ENCODE measurements at regions of chr17 and their contacts with region 1.

Region 1: DNA sequence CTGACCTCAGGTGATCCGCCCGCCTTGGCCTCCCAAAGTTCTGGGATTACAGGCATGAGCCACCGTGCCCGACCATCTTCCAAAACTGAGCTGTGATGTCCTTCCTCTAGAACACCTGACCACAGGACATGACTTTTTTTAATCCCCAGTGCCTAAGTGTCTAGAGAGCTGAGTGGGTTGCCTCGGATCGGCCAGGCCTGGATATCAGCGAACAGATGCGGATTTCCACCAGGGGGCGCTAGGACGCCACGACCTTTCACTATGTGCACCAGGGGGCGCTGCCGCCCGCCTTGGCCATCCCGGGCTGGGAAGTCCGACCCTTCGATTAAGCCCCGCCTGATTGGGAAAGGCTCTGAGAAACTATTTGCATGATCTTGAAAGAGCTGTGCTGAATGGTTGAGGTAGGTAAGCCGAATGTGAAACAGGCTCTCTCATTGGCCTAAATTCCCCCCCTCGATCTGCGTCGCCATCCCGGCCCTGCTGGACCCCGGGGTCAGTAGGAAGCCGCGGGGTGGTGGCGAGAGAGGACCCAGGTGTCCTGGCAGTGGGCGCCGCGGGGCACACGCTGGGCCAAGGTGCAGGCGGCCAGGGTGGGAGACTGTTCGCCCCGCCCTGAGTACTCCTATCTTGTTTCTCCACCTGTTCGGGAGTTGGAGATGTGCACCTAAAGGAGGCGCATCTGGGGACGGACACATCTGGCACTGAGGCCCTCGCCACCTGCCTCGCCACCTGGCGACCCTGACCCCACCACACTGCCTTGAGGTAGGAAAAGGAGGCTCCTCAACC is at the start of gene ACBD4:
- DNase-seq: peak; percentile 97
- ATAC-seq: peak; percentile 71
- H3K4me3 ChIP-seq: peak within 1 kb of the TSS; percentile 47
- H3K27ac ChIP-seq: peak within 1 kb of the TSS; percentile 4
- H3K4me1 ChIP-seq: peaks cover 15% of the 10 kb centered on the region
- H3K27me3 ChIP-seq: no peaks in the 10 kb centered on the region
- CTCF ChIP-seq: peak; percentile 100; the same call in 1 of the 2 replicates
- POLR2A ChIP-seq: 0 out of 2 replicates have a peak, but pooled peaks have one; percentile 47
- RAD21 ChIP-seq: peak; percentile 99
- total RNA-seq, gene ACBD4: 1.7 and 2.3 TPM in 2 replicates

Region 2: GRCh38 chr17:44775136-44775837 is 360.1 kb before region 1 on chr17:
- CTCF ChIA-PET with region 1: no interaction called
- POLR2A ChIA-PET with region 1: no interaction called
- dilution Hi-C with region 1: no loop called
- in situ Hi-C with region 1: no loop called
- intact Hi-C with region 1: loop called (anchors 2 kb)
- DNase-seq: peak; percentile 95
- ATAC-seq: peak; percentile 95
- H3K4me3 ChIP-seq: peak overlapping the region; percentile 53
- H3K27ac ChIP-seq: no peak overlapping the region
- H3K4me1 ChIP-seq: peaks cover 3% of the 10 kb centered on the region; the same call in 1 of the 2 replicates
- H3K27me3 ChIP-seq: peaks cover 9% of the 10 kb centered on the region
- CTCF ChIP-seq: no peak
- POLR2A ChIP-seq: no peak
- RAD21 ChIP-seq: no peak

Region 3: GRCh38 chr17:44887016-44887415 is 248.4 kb before region 1 on chr17:
- CTCF ChIA-PET with region 1: no interaction called
- POLR2A ChIA-PET with region 1: no interaction called
- dilution Hi-C with region 1: no loop called
- in situ Hi-C with region 1: no loop called
- intact Hi-C with region 1: no loop called
- DNase-seq: no peak
- ATAC-seq: no peak
- H3K4me3 ChIP-seq: no peak overlapping the region
- H3K27ac ChIP-seq: no peak overlapping the region
- H3K4me1 ChIP-seq: no peaks in the 10 kb centered on the region
- H3K27me3 ChIP-seq: no peaks in the 10 kb centered on the region
- CTCF ChIP-seq: no peak
- POLR2A ChIP-seq: no peak
- RAD21 ChIP-seq: no peak

Region 4: GRCh38 chr17:44911133-44912001 is 224.0 kb before region 1 on chr17:
- CTCF ChIA-PET with region 1: no interaction called
- POLR2A ChIA-PET with region 1: no interaction called
- dilution Hi-C with region 1: no loop called
- in situ Hi-C with region 1: no loop called
- intact Hi-C with region 1: no loop called
- DNase-seq: peak; percentile 24
- ATAC-seq: peak; percentile 42
- H3K4me3 ChIP-seq: no peak overlapping the region
- H3K27ac ChIP-seq: no peak overlapping the region
- H3K4me1 ChIP-seq: peaks cover 11% of the 10 kb centered on the region
- H3K27me3 ChIP-seq: peaks cover 9% of the 10 kb centered on the region; the same call in 1 of the 2 replicates
- CTCF ChIP-seq: peak; percentile 47
- POLR2A ChIP-seq: no peak
- RAD21 ChIP-seq: 0 out of 2 replicates have a peak, but pooled peaks have one; percentile 14

Region 5: DNA sequence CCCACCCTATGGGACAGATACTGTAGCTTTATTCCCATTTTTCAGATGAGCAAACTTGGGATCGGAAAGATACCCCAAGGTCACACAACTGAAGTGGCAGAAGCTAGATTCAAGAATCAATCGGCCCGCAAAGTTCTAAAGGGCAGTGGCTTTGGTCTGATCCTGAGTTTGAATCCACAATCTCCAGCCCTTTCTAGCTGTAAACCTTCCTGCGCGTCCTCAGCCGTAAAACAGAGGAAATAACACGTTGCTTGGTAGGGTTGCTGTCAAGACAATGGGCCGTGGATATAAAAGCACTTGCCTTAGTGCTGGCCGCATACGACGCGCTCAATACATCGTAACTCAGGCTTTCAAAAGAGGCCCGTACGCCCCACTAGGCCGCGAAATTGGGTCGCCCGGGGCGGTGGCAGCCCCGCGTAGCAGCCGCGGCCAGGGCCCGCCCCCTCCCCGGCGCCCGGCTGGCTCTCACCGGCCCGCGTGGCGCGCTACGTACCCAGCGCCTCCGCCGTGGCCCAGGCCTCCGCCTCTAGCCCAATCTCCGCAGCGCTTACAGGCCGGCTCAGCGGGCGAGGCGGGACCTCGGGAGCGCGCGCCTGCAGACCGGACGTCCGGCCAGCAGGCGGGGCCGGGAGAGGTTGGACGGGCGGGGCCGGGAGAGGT is 84.2 kb before region 1 on chr17 and contains the start of gene DCAKD:
- CTCF ChIA-PET with region 1: interaction called, 4 read pairs
- POLR2A ChIA-PET with region 1: interaction called, 3 read pairs
- dilution Hi-C with region 1: no loop called
- in situ Hi-C with region 1: no loop called
- intact Hi-C with region 1: loop called (anchors 5 kb)
- DNase-seq: peak; percentile 95
- ATAC-seq: peak; percentile 99
- H3K4me3 ChIP-seq: peak within 1 kb of the TSS; percentile 75
- H3K27ac ChIP-seq: peak within 1 kb of the TSS; percentile 99
- H3K4me1 ChIP-seq: peaks cover 6% of the 10 kb centered on the region; the same call in 1 of the 2 replicates
- H3K27me3 ChIP-seq: no peaks in the 10 kb centered on the region
- CTCF ChIP-seq: no peak
- POLR2A ChIP-seq: peak; percentile 89
- RAD21 ChIP-seq: no peak
- total RNA-seq, gene DCAKD: 42.5 and 47.9 TPM in 2 replicates

Region 6: DNA sequence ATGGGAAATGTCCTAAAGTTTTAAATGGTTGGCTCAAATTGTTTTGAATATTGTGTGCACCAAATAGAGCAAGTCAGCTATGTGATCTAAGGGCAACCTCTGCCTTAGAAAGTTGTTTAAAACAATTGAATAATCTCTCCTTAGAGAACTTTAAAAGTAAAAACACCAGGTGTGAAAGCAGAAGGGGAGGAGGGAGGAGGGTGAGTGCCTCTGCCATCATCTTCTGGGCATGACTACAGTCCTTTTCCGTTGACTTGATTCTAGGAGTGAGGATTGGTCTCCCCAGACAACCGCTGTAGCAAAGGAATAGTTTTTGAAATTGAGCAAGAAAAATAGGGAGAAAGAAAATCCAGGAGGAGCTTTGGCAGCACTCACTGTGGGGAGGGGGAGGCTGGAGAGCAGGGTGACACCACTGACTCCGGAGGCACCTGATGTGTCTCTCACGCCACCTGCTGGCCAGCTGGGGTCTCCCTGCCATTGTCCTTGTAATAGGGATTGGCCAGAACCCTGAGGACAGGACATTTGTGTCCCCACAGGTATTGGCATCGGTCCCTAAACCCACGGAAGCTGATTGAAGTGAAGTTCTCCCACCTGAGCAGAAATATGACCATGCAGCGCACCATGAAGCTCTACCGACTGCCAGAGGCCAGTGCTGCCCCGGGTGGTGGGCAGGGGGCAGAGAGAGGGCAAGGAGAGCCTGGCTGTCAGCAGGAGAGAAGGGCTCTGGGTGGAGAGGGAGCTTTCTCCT is 36.3 kb before region 1 on chr17:
- CTCF ChIA-PET with region 1: interaction called, 7 read pairs
- POLR2A ChIA-PET with region 1: no interaction called
- dilution Hi-C with region 1: no loop called
- in situ Hi-C with region 1: no loop called
- intact Hi-C with region 1: loop called (anchors 1 kb)
- DNase-seq: peak; percentile 66
- ATAC-seq: peak; percentile 85
- H3K4me3 ChIP-seq: no peak overlapping the region
- H3K27ac ChIP-seq: peak overlapping the region; percentile 66; the same call in 1 of the 2 replicates
- H3K4me1 ChIP-seq: peaks cover 7% of the 10 kb centered on the region; the same call in 1 of the 2 replicates
- H3K27me3 ChIP-seq: no peaks in the 10 kb centered on the region
- CTCF ChIP-seq: peak; percentile 78
- POLR2A ChIP-seq: no peak
- RAD21 ChIP-seq: peak; percentile 77

Region 7: GRCh38 chr17:45161019-45161825 is 25.8 kb after region 1 on chr17:
- CTCF ChIA-PET with region 1: interaction called, 12 read pairs
- POLR2A ChIA-PET with region 1: interaction called, 3 read pairs
- dilution Hi-C with region 1: no loop called
- in situ Hi-C with region 1: no loop called
- intact Hi-C with region 1: loop called (anchors 1 kb)
- DNase-seq: peak; percentile 100
- ATAC-seq: peak; percentile 94
- H3K4me3 ChIP-seq: peak overlapping the region; percentile 75
- H3K27ac ChIP-seq: peak overlapping the region; percentile 98
- H3K4me1 ChIP-seq: peaks cover 17% of the 10 kb centered on the region
- H3K27me3 ChIP-seq: no peaks in the 10 kb centered on the region
- CTCF ChIP-seq: no peak
- POLR2A ChIP-seq: peak; percentile 95
- RAD21 ChIP-seq: no peak; the same call in 1 of the 2 replicates

Region 8: GRCh38 chr17:45852535-45853297 is 717.3 kb after region 1 on chr17:
- CTCF ChIA-PET with region 1: no interaction called
- POLR2A ChIA-PET with region 1: no interaction called
- dilution Hi-C with region 1: no loop called
- in situ Hi-C with region 1: no loop called
- intact Hi-C with region 1: loop called (anchors 5 kb)
- DNase-seq: peak; percentile 55
- ATAC-seq: peak; percentile 82
- H3K4me3 ChIP-seq: no peak overlapping the region
- H3K27ac ChIP-seq: no peak overlapping the region
- H3K4me1 ChIP-seq: no peaks in the 10 kb centered on the region
- H3K27me3 ChIP-seq: peaks cover 7% of the 10 kb centered on the region; the same call in 1 of the 2 replicates
- CTCF ChIP-seq: peak; percentile 89
- POLR2A ChIP-seq: no peak
- RAD21 ChIP-seq: peak; percentile 74